ENCODE measurements at regions of chr6 and their contacts with region 1.

Region 1: GRCh38 chr6:72622094-72622940 is 453 bp downstream of the KCNQ5 start:
- DNase-seq: peak; percentile 51 to 72 (median 60)
- ATAC-seq: peak; percentile 72
- H3K4me3 ChIP-seq: peak overlapping the region; percentile 82
- H3K4me3 Mint-ChIP-seq: peak overlapping the region; percentile 90 to 98 (median 94)
- H3K27ac ChIP-seq: peak overlapping the region; percentile 52
- H3K27ac Mint-ChIP-seq: peak overlapping the region; percentile 23 to 88 (median 76)
- H3K4me1 ChIP-seq: peaks cover 14 to 27% of the 10 kb centered on the region in 2 donors
- H3K4me1 Mint-ChIP-seq: peaks cover 39 to 69% (median 51%) of the 10 kb centered on the region in 7 donors
- H3K27me3 ChIP-seq: no peaks in the 10 kb centered on the region
- H3K27me3 Mint-ChIP-seq: no peaks in the 10 kb centered on the region

Region 2: DNA sequence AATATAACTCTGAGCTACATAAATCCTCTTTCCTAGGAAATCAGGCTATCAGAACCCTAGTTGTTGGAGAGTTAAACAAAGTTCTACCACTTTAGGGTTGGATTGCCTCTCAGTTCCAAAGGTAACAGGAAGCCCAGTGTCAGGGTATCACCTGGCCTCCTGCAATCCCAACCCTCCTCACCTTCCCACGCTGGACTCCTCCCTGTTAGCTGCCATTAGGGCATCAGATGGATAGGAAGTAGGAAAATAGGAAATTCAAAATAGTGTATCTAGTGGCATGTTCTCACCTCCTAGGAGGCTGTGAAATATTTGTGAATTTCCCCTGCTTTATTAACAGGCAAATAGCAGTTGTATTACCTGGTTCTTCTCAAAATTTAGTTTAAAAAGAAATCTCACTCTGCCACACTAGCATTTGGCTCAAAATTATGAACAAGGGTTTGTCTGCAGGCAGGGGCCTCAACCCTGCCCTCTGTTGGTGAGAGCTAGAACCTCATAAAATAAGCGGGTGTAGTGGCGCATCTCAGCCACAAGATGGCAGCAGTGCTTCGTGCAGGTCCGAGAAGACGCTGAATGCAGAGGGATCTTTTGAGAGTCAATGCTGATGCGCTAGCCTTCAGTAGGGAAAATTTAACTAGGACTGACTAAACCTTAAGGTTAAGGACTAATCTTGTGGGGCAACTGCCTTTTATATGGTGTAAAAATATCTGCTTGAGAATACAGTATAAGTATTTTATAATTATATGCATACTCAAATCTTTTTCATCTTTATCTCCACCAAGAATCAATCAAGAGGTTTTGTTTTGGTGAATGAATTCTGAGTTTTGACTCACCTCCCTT is 210.2 kb before region 1 on chr6:
- CTCF ChIA-PET with region 1: interaction called, 7 read pairs
- POLR2A ChIA-PET with region 1: no interaction called
- intact Hi-C with region 1: loop called (anchors 1 to 2 kb)
- DNase-seq: peak; percentile 61 to 93 (median 79)
- ATAC-seq: peak; percentile 99
- H3K4me3 ChIP-seq: no peak overlapping the region
- H3K4me3 Mint-ChIP-seq: no peak overlapping the region
- H3K27ac ChIP-seq: no peak overlapping the region
- H3K27ac Mint-ChIP-seq: peak overlapping the region in 2 of 9 donors; percentile 15 to 28
- H3K4me1 ChIP-seq: no peaks in the 10 kb centered on the region
- H3K4me1 Mint-ChIP-seq: peaks cover 0 to 2% (median 0%) of the 10 kb centered on the region in 7 donors
- H3K27me3 ChIP-seq: no peaks in the 10 kb centered on the region
- H3K27me3 Mint-ChIP-seq: peaks cover 0 to 13% (median 0%) of the 10 kb centered on the region in 5 donors

Region 3: GRCh38 chr6:72669324-72669723 is 47.0 kb after region 1 on chr6:
- CTCF ChIA-PET with region 1: interaction called, 3 read pairs
- POLR2A ChIA-PET with region 1: no interaction called
- intact Hi-C with region 1: loop called in 1 of 2 experiments (anchors 2 kb)
- DNase-seq: peak in 6 of 9 donors; percentile 12 to 41 (median 20)
- ATAC-seq: peak; percentile 60
- H3K4me3 ChIP-seq: no peak overlapping the region
- H3K4me3 Mint-ChIP-seq: no peak overlapping the region
- H3K27ac ChIP-seq: no peak overlapping the region
- H3K27ac Mint-ChIP-seq: peak overlapping the region in 1 of 9 donors; percentile 39
- H3K4me1 ChIP-seq: no peaks in the 10 kb centered on the region
- H3K4me1 Mint-ChIP-seq: peaks cover 4 to 30% (median 21%) of the 10 kb centered on the region in 7 donors
- H3K27me3 ChIP-seq: no peaks in the 10 kb centered on the region
- H3K27me3 Mint-ChIP-seq: no peaks in the 10 kb centered on the region

Region 4: GRCh38 chr6:73129653-73130443 is 507.5 kb after region 1 on chr6:
- CTCF ChIA-PET with region 1: interaction called, 102 read pairs
- POLR2A ChIA-PET with region 1: interaction called, 5 read pairs
- intact Hi-C with region 1: loop called (anchors 1 kb)
- DNase-seq: peak; percentile 52 to 85 (median 77)
- ATAC-seq: peak; percentile 93
- H3K4me3 ChIP-seq: no peak overlapping the region
- H3K4me3 Mint-ChIP-seq: peak overlapping the region in 8 of 10 donors; percentile 23 to 71 (median 52)
- H3K27ac ChIP-seq: no peak overlapping the region
- H3K27ac Mint-ChIP-seq: peak overlapping the region in 1 of 9 donors; percentile 48
- H3K4me1 ChIP-seq: no peaks in the 10 kb centered on the region
- H3K4me1 Mint-ChIP-seq: peaks cover 0 to 6% (median 3%) of the 10 kb centered on the region in 7 donors
- H3K27me3 ChIP-seq: no peaks in the 10 kb centered on the region
- H3K27me3 Mint-ChIP-seq: peaks cover 0 to 4% (median 0%) of the 10 kb centered on the region in 5 donors

Region 5: GRCh38 chr6:73329201-73329600 is 706.9 kb after region 1 on chr6:
- CTCF ChIA-PET with region 1: interaction called, 7 read pairs
- POLR2A ChIA-PET with region 1: interaction called, 4 read pairs
- intact Hi-C with region 1: loop called in 1 of 2 experiments (anchors 5 kb)
- DNase-seq: no peak
- ATAC-seq: no peak
- H3K4me3 ChIP-seq: no peak overlapping the region
- H3K4me3 Mint-ChIP-seq: no peak overlapping the region
- H3K27ac ChIP-seq: no peak overlapping the region
- H3K27ac Mint-ChIP-seq: no peak overlapping the region
- H3K4me1 ChIP-seq: no peaks in the 10 kb centered on the region
- H3K4me1 Mint-ChIP-seq: peaks cover 0 to 6% (median 0%) of the 10 kb centered on the region in 7 donors
- H3K27me3 ChIP-seq: no peaks in the 10 kb centered on the region
- H3K27me3 Mint-ChIP-seq: peaks cover 4 to 42% (median 19%) of the 10 kb centered on the region in 5 donors

Region 6: DNA sequence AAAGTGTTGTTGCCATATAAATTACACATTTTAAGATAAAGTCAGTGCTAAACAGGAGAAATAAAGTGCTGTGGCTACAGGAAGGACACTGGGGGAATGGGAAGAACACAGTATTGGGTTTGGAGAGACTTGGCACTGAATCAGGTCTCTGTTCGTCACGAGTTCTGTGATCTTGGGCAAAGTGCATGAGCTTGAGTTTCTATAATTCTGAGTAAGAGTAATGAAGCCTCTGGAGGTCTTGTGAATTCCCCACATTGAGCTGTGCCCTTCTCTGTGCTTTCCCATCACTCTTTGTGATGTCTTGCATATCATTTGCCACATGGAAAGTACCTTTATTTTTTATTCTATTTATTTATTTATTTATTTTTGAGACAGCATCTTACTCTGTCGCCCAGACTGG is 915.4 kb after region 1 on chr6:
- CTCF ChIA-PET with region 1: no interaction called
- POLR2A ChIA-PET with region 1: no interaction called
- intact Hi-C with region 1: loop called in 1 of 2 experiments (anchors 5 kb)
- DNase-seq: no peak
- ATAC-seq: no peak
- H3K4me3 ChIP-seq: no peak overlapping the region
- H3K4me3 Mint-ChIP-seq: no peak overlapping the region
- H3K27ac ChIP-seq: no peak overlapping the region
- H3K27ac Mint-ChIP-seq: no peak overlapping the region
- H3K4me1 ChIP-seq: no peaks in the 10 kb centered on the region
- H3K4me1 Mint-ChIP-seq: no peaks in the 10 kb centered on the region
- H3K27me3 ChIP-seq: no peaks in the 10 kb centered on the region
- H3K27me3 Mint-ChIP-seq: peaks cover 0 to 10% (median 0%) of the 10 kb centered on the region in 5 donors

Measured in naive thymus-derived CD4-positive, alpha-beta T cell (primary cell).